ENCODE measurements at regions of chr17 and their contacts with region 1.

Region 1: DNA sequence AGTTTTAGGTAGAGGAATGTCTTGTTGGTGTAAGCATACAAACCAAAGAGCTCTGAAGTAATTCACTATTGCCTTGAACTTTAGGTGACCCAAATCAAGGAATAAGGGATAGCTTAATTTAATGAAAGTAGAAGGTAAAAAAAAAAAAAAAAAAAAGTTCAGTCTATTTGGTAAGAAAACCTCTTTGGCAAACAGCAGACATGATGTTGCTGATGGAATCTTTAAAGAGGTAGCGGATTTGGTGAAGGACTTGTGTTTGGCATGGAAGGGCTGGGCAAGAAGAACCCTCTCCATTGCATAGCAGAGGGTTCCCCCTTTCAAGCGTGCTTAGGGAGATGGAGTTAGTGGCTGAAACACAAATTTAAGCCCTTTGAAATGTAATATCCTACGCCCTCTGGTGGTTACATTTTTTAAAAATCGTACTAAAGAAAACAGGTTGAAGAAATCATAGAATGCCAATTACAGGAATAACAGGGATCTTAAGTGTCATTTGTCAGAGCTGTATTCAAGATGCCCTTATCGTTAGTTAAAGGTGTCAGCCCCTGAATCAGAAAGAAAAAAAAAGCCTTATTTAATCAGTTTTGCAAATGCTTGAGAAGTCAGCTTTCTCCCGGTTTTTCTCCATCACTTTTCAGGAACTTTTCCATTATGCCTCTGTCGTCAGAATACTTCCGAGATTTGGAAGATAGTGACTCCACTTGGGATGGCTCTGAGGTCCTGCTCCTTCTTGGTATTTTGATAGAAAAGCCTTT is 383.1 kb downstream of the KCNJ2 start:
- DNase-seq: no peak
- ATAC-seq: peak in 3 of 4 donors; percentile 47 to 75 (median 55)
- H3K4me3 ChIP-seq: no peak overlapping the region
- H3K27ac ChIP-seq: no peak overlapping the region
- H3K4me1 ChIP-seq: no peaks in the 10 kb centered on the region
- H3K27me3 ChIP-seq: no peaks in the 10 kb centered on the region
- CTCF ChIP-seq: peak; percentile 63

Region 2: GRCh38 chr17:69567130-69567529 is 985.3 kb before region 1 on chr17:
- intact Hi-C with region 1: loop called (anchors 5 kb)
- DNase-seq: no peak
- ATAC-seq: peak in 1 of 4 donors; percentile 41
- H3K4me3 ChIP-seq: no peak overlapping the region
- H3K27ac ChIP-seq: no peak overlapping the region
- H3K4me1 ChIP-seq: no peaks in the 10 kb centered on the region
- H3K27me3 ChIP-seq: no peaks in the 10 kb centered on the region
- CTCF ChIP-seq: no peak

Region 3: DNA sequence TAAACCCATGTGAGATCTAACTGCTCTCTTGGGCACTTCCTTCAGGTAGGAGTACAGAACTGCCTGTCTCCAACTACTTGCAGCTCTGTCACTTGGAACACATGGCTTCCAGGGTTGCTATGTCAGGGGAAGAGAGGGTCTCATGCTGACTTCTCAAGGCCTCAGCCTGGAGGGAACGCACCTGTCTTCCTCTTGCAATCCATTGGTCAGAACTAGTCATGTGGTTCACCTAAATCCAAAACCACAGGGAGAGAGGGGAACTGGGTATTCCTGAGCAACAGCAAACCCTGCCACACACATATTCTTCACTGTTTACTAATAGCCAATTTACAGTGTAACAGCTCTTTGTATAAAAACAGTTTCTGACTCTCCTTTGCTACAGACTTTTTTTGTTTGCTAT is 177.0 kb before region 1 on chr17:
- intact Hi-C with region 1: no loop called
- DNase-seq: no peak
- ATAC-seq: no peak
- H3K4me3 ChIP-seq: no peak overlapping the region
- H3K27ac ChIP-seq: no peak overlapping the region
- H3K4me1 ChIP-seq: no peaks in the 10 kb centered on the region
- H3K27me3 ChIP-seq: no peaks in the 10 kb centered on the region
- CTCF ChIP-seq: no peak

Measured in psoas muscle (tissue), 8 donors.